ENCODE measurements at regions of chr16 and their contacts with region 1.

Region 1: DNA sequence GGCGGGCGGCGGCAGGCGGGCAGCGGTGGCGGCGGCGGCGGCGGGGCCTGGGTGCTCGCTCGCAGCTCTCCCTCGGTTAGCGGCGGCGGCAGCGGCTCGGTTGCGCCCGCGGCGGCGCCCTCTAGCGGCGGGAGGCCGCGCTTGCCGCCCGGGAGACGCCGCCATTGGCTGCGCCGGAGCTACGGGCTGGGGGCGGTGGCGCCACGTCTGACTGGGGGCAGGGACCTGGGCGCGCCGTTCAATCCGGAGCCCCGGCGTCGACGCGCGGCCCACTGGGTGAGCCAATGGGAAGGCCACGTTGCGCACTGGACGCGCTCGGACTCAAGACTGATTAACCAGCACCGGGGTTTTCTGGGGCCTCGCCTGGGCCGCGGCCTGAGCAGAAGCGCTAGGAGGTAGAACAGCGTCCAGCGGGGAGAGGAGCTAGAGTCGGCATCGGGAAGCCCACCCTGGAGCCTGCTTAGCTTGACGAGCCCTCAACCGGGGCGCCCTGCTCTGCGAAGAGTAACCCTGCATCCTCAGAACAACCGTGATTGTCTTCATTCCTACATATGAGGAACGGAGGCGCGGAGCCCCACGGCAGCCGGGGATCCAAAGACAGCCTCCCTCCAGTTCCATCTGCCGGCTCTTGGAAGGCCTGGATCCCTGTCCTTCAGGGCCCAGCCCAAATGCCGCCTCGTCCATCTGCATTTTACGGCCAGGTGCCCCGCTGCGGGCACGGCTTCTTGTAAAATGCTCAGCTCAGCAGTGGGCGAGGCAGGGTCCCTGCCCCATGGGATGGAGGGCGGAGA is at the start of gene ZC3H7A:
- DNase-seq: peak; percentile 98
- ATAC-seq: peak; percentile 98
- total RNA-seq, gene ZC3H7A: 24.0 to 28.2 TPM

Region 2: DNA sequence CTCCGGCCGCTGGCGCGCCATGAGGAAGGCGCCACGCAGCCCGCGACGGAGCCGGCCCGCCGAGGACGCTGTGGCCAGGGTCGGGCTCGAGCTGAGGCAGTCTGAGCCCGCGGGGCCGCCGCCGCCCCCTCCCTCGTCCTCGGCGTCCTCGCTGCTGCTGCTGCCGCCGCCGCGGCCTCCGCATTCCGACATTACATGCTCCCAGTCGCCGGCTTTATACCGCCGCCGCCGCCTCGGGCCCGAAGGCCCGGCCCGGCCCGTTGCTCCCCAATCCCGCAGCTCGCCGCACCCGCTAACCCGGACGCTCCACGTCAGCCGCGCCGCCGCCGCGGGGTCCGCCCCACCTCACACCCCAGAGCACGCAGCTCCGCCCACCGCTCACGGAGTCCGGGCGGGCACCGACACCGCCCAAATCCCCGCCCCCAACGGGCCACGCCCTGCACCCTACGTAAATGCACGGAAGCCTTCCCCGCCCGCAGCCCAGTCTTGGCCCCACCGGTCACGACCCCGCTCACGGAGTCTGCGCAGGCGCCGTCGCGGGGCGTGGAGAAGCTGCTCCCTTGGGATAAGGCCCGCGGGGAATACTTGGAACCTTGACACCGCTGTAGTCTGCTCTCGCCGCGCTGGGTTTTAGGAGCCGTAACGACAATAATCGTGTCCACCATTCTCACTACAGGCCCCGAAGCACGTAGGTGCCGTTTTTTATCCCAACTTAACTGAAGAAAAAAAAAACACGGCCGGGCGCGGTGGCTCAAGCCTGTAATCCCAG is 54.6 kb before region 1 on chr16 and contains the start of gene TXNDC11:
- intact Hi-C with region 1: loop called in 1 of 2 experiments (anchors 5 kb)
- DNase-seq: peak; percentile 99
- ATAC-seq: peak; percentile 97 to 98
- total RNA-seq, gene TXNDC11: 21.8 to 30.4 TPM